ENCODE measurements at regions of chr5 and their contacts with region 1.

Region 1: GRCh38 chr5:93582677-93583438 is at the start of gene NR2F1:
- DNase-seq: peak; percentile 96
- H3K4me3 ChIP-seq: peak within 1 kb of the TSS; percentile 71 to 87 (median 76)
- H3K27ac ChIP-seq: peak within 1 kb of the TSS; percentile 77 to 95 (median 91)
- H3K4me1 ChIP-seq: peaks cover 47 to 75% (median 59%) of the 10 kb centered on the region in 4 donors
- H3K27me3 ChIP-seq: peaks cover 0 to 35% (median 7%) of the 10 kb centered on the region in 4 donors
- CTCF ChIP-seq: peak; percentile 47 to 100 (median 89)
- EP300 ChIP-seq: no peak
- POLR2A ChIP-seq: no peak
- total RNA-seq, gene NR2F1: 17.4 to 43.8 (median 40.6) TPM

Region 2: DNA sequence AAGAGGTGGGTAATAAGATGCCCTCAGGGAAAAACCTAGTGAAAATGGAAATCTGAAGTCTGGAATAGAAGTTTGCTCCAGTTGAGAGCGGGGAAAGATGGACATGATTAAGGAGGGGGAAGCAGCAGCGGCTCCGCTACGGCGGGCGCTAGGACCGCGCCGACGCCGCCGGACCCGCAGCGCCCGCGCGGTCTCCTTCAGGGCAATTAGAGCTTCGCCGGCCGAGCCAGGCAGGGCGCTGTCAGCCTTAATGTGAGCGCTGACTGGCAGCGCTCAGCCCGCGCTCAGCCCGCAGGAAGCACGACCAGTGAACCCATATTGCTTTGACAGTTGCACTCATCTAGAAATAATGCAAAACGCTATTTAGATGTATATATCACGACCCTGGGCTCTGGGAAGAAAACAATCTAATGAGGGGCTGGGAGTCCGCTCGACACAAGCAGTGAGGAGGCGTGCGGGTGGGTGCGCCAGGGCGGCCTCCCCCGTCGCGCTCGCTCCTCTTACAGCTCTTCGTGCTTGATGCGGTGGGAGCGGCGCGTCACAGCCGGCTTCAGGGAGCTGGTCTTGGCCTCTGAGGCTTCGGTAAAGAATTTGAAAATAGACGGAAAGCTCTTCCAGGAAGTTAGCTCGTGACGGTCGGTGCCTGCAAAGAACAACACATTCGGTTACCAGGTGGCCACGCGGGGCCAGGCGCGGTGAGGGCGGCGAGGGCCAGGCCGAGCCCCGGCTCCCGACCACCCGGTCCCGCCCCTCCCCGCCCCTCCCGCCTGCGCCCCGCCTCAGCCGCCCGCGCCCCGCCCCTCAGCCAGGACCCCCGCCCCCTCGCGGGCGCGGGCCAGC is 37.8 kb after region 1 on chr5:
- intact Hi-C with region 1: loop called (anchors 2 kb)
- DNase-seq: no peak
- H3K4me3 ChIP-seq: peak overlapping the region; percentile 66 to 80 (median 70)
- H3K27ac ChIP-seq: peak overlapping the region; percentile 85 to 90 (median 86)
- H3K4me1 ChIP-seq: peaks cover 9 to 18% (median 15%) of the 10 kb centered on the region in 4 donors
- H3K27me3 ChIP-seq: no peaks in the 10 kb centered on the region
- CTCF ChIP-seq: peak in 2 of 3 experiments; percentile 20 to 25
- EP300 ChIP-seq: no peak
- POLR2A ChIP-seq: no peak

Region 3: GRCh38 chr5:93675460-93676450 is 92.9 kb after region 1 on chr5:
- intact Hi-C with region 1: no loop called
- DNase-seq: no peak
- H3K4me3 ChIP-seq: no peak overlapping the region
- H3K27ac ChIP-seq: no peak overlapping the region
- H3K4me1 ChIP-seq: peaks cover 7 to 10% (median 9%) of the 10 kb centered on the region in 4 donors
- H3K27me3 ChIP-seq: no peaks in the 10 kb centered on the region
- CTCF ChIP-seq: no peak
- EP300 ChIP-seq: no peak
- POLR2A ChIP-seq: no peak

Region 4: DNA sequence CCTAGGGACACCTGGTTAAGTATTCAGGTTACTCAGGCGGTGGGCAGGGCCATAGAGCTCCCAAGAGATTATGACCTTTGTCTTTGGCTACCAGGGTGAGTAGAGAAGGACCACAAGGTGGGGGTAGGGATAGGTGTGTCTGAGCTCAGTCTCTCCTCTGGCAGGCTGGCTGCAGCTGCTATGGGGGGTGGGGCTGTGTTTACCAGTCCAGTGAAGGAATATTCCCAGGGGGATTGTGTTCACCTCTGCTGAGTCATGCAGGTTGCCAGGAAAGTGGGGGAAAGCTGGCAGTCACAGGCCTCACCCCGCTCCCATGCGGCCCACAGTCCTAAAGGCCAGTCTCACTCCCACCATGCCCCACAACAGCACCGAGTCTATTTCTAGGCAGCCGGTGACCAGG is 212.1 kb after region 1 on chr5:
- intact Hi-C with region 1: loop called (anchors 5 kb)
- DNase-seq: no peak
- H3K4me3 ChIP-seq: no peak overlapping the region
- H3K27ac ChIP-seq: no peak overlapping the region
- H3K4me1 ChIP-seq: no peaks in the 10 kb centered on the region
- H3K27me3 ChIP-seq: no peaks in the 10 kb centered on the region
- CTCF ChIP-seq: no peak
- EP300 ChIP-seq: no peak
- POLR2A ChIP-seq: no peak

Region 5: GRCh38 chr5:93915142-93915553 is 332.3 kb after region 1 on chr5:
- intact Hi-C with region 1: loop called (anchors 10 kb)
- DNase-seq: no peak
- H3K4me3 ChIP-seq: no peak overlapping the region
- H3K27ac ChIP-seq: no peak overlapping the region
- H3K4me1 ChIP-seq: no peaks in the 10 kb centered on the region
- H3K27me3 ChIP-seq: no peaks in the 10 kb centered on the region
- CTCF ChIP-seq: peak; percentile 42 to 50 (median 45)
- EP300 ChIP-seq: no peak
- POLR2A ChIP-seq: no peak

Measured in esophagus muscularis mucosa (tissue), 4 donors.